Heart right ventricle (tissue), 16 donors: ENCODE measurements at regions of chr2 and their contacts with region 1.

Region 1: DNA sequence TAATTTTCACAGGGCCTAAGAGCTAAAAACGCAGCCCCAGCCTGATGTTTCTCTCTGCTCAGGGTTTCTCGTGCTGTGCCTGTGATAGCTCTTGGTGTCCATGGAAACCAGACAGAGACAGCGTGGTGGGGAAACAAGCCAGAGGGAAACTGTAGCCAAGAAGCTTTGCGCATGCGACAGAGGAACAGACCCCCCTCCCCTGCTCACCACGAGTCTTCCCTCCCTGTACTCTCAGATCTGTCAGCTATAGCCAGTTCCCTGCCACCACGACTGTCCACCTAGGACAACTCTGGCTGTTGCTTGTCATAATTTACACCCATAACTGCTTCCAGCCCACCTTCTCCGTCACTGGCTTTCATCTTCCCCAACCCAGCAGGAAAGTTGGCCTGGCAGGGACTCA is 13.2 kb upstream of the DNAJC27 start:
- DNase-seq: peak; percentile 36 to 81
- ATAC-seq: peak; percentile 63 to 97 (median 92)
- H3K4me3 ChIP-seq: no peak overlapping the region
- H3K27ac ChIP-seq: peak overlapping the region in 8 of 10 donors; percentile 15 to 85 (median 65)
- H3K4me1 ChIP-seq: peaks cover 4 to 28% (median 20%) of the 10 kb centered on the region in 9 donors
- H3K27me3 ChIP-seq: no peaks in the 10 kb centered on the region
- CTCF ChIP-seq: no peak

Region 2: DNA sequence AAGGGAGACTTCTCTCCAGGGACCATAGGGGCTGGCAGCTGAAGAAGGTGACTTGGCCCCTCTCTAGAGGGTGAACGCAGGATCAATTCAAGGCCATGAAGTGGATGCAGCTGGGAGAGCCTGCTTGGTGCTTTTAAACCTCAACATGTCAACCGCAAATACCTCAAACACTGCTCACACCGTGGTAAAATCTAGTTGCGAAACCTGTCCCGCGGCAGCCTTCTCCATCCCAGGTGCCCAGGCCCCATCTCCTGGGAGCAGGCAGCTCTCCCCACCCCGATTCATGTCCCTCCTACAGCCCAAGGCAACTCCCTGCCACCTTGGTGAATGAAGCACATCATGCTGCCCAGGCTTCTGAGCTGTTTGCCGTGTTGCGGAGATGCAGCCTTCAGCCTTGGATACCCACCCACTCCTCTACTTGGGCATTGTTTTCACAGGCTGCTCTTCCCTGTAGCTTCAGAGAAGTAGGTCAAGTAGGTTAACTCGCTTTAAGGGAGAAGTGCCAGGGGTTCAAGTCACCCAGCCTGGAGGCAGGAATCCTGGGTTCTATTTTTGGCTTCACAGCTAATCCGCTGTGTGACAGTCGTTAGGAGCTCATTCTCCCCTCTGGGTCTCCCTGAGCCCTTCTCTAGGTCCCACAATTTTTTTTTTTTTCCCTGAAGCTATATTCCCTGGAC is 50.8 kb after region 1 on chr2:
- intact Hi-C with region 1: loop called in 4 of 10 experiments (anchors 5 kb)
- DNase-seq: no peak
- ATAC-seq: no peak
- H3K4me3 ChIP-seq: no peak overlapping the region
- H3K27ac ChIP-seq: no peak overlapping the region
- H3K4me1 ChIP-seq: peaks cover 0 to 13% (median 0%) of the 10 kb centered on the region in 9 donors
- H3K27me3 ChIP-seq: peaks cover 0 to under 1% (median 0%) of the 10 kb centered on the region in 7 donors
- CTCF ChIP-seq: no peak

Region 3: GRCh38 chr2:25078171-25079049 is 93.5 kb after region 1 on chr2:
- intact Hi-C with region 1: no loop called
- DNase-seq: peak in 1 of 2 donors; percentile 35
- ATAC-seq: peak; percentile 56 to 91 (median 70)
- H3K4me3 ChIP-seq: peak overlapping the region in 1 of 10 donors; percentile 7
- H3K27ac ChIP-seq: peak overlapping the region in 9 of 10 donors; percentile 47 to 78 (median 64)
- H3K4me1 ChIP-seq: peaks cover 4 to 63% (median 37%) of the 10 kb centered on the region in 9 donors
- H3K27me3 ChIP-seq: no peaks in the 10 kb centered on the region
- CTCF ChIP-seq: no peak